AG04449 (cell line): ENCODE measurements at regions of chr7 and their contacts with region 1.

Region 1: DNA sequence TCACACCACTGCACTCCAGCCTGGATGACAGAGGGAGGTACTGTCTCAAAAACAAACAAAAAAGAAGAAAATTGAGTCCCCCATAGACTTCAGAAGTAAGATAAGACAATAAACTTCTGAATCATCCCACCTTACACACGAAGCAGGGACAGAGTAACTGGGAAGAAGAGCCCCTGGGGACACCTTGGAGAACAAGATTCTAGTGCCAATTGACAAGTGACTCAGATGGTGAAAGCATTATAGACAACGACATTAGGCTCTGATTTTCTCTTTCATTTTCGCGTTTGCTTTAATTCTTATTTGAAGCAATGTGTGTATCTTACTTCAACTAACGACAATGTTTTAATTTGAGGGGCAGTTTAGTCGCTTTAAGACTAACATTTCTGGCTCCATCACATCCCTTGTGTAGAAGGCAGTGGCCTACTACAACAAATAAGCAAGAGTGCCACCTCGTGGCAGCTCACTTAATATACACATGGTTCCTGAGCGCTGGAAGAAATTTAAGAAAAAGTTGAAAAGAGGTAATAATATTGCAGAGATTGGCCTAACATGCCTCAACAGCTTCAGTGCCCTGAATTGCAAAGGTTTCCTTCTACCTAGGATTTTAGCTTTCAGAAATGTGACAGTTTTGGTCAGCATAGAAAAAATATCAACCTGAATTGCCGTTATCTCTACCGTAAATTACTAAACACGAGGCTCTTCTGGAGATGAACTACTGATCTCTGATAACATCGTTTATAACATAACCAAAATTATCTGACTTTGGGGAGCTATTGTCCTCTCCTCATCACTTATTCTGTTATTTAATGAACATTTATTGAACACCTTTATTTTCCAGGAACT is 36.7 kb downstream of the ASNS start:
- DNase-seq: peak; percentile 4
- H3K4me3 ChIP-seq: no peak overlapping the region
- CTCF ChIP-seq: peak; percentile 50

Region 2: DNA sequence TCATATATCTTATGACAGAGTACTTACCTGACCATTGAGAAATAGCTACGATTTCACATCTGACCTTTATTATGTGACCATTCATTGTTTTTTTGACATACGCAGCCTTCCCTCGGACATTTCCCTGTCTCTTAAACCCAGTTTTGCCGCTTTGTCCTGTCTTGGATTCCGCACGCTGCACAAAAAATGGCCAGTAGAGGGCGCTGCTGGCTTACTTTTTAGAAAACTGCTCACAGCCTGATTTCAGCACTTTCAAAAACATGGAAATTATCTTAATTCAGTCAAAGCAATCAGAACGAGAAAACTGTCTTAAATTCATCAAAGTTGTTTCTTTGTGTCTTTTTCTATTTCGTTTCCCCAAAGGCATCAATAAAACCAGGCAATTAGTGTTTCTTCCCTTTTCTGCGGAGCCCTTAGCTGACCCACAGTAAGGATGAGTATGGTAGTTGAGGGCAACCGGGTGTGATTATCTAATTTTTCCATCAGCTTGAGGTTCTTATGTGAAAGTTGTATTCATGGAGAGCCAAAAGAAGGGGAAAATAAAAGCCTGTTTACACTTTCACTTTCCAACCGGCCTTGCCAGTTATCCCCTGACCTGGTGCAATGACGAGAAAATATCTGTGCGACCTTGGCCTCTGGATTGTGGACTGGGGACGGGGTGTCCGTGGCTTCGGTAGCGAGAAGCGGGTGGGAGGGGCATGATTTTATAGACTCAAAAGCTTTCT is 1918.8 kb before region 1 on chr7:
- CTCF ChIA-PET with region 1: interaction called, 17 read pairs
- POLR2A ChIA-PET with region 1: no interaction called
- DNase-seq: peak; percentile 4
- H3K4me3 ChIP-seq: no peak overlapping the region
- CTCF ChIP-seq: peak; percentile 78

Region 3: GRCh38 chr7:97104719-97105238 is 730.7 kb before region 1 on chr7:
- CTCF ChIA-PET with region 1: interaction called, 34 read pairs
- POLR2A ChIA-PET with region 1: no interaction called
- DNase-seq: no peak
- H3K4me3 ChIP-seq: no peak overlapping the region
- CTCF ChIP-seq: peak; percentile 69

Region 4: GRCh38 chr7:97117372-97118188 is 717.9 kb before region 1 on chr7 and contains the start of gene SDHAF3:
- CTCF ChIA-PET with region 1: interaction called, 12 read pairs
- POLR2A ChIA-PET with region 1: no interaction called
- DNase-seq: peak; percentile 84
- H3K4me3 ChIP-seq: peak within 1 kb of the TSS; percentile 97
- CTCF ChIP-seq: peak; percentile 15

Region 5: DNA sequence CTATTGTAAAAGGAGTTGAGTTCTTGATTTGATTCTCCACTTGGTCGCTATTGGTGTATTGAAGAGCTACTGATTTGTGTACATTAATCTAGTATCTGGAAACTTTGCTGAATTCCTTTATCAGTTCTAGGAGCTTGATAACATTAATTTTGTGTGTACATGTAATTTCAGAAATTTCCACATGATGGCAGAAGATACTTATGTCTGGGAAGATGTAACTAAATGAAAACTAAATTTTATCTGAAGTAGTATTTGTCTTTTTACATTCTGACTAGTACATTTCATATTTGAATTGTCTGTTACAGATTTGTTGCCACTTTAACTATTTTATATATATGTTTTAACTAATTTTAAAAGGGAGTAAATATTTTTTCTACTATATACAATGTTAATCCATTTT is 690.4 kb before region 1 on chr7:
- CTCF ChIA-PET with region 1: interaction called, 24 read pairs
- POLR2A ChIA-PET with region 1: no interaction called
- DNase-seq: no peak
- H3K4me3 ChIP-seq: no peak overlapping the region
- CTCF ChIP-seq: peak; percentile 22

Region 6: DNA sequence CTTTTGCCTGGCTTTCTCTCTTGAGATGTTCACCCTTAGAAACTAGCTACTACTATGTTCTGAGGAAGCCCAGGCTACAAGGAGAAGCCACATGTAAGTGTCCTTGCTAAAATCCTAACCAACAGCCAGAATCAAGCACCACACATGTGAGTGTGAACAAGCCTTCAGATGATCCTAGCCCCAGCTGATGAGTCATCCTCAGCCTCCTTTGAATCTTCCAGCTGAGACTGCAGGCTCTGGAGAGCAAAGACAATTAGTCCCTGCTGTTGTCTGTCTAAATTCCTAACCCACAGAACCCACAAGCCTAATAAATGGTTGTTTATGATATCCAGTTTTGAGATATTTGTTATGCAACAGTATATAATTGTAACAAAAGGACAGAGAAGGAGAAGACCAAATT is 196.5 kb before region 1 on chr7:
- CTCF ChIA-PET with region 1: no interaction called
- POLR2A ChIA-PET with region 1: no interaction called
- DNase-seq: no peak
- H3K4me3 ChIP-seq: no peak overlapping the region
- CTCF ChIP-seq: no peak

Region 7: DNA sequence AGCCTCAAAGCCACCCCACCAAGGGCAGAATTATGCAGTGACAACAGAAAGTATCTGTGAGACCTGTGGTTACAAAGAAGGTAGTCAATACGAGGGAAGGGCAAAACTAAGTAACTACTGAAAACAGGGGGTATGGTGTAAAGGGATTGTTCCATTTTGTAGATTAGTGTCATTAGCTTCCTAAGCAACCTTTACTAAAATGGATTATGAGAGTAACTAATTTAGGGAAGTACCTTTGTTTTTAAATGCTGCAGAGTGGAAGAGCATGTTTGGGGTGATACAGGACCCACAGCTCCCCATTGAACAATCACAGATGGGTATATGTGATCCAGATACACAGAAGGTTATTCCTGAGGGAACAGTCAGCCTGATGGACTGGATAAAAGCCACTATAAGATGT is 154.9 kb before region 1 on chr7:
- CTCF ChIA-PET with region 1: no interaction called
- POLR2A ChIA-PET with region 1: no interaction called
- DNase-seq: no peak
- H3K4me3 ChIP-seq: no peak overlapping the region
- CTCF ChIP-seq: no peak

Region 8: GRCh38 chr7:97819161-97819560 is 16.4 kb before region 1 on chr7:
- CTCF ChIA-PET with region 1: interaction called, 31 read pairs
- POLR2A ChIA-PET with region 1: no interaction called
- DNase-seq: no peak
- H3K4me3 ChIP-seq: no peak overlapping the region
- CTCF ChIP-seq: no peak

Region 9: GRCh38 chr7:97845622-97846203 is 10.2 kb after region 1 on chr7:
- CTCF ChIA-PET with region 1: interaction called, 71 read pairs
- POLR2A ChIA-PET with region 1: no interaction called
- DNase-seq: no peak
- H3K4me3 ChIP-seq: no peak overlapping the region
- CTCF ChIP-seq: peak; percentile 13